ENCODE measurements at regions of chrX and their contacts with region 1.

Region 1: GRCh38 chrX:84729809-84730208 is 227.6 kb upstream of the HDX start:
- DNase-seq: peak; percentile 5 to 43
- ATAC-seq: peak; percentile 96 to 97
- H3K4me3 ChIP-seq: no peak overlapping the region
- H3K27ac ChIP-seq: no peak overlapping the region
- H3K4me1 ChIP-seq: no peaks in the 10 kb centered on the region
- CTCF ChIP-seq: peak; percentile 67
- EP300 ChIP-seq: no peak
- POLR2A ChIP-seq: no peak
- RAD21 ChIP-seq: peak; percentile 59 to 69

Region 2: GRCh38 chrX:84907324-84907968 is 177.6 kb after region 1 on chrX:
- CTCF ChIA-PET with region 1: interaction called, 14 read pairs
- POLR2A ChIA-PET with region 1: no interaction called
- DNase-seq: peak in 1 of 2 experiments; percentile 11
- ATAC-seq: peak in 1 of 2 experiments; percentile 51; a peak in 2 of 6 replicates
- H3K4me3 ChIP-seq: no peak overlapping the region
- H3K27ac ChIP-seq: no peak overlapping the region
- H3K4me1 ChIP-seq: no peaks in the 10 kb centered on the region
- CTCF ChIP-seq: no peak; the same call in 1 of the 3 replicates
- EP300 ChIP-seq: no peak
- POLR2A ChIP-seq: no peak
- RAD21 ChIP-seq: peak in 1 of 2 experiments; percentile 27; a peak in 1 of 5 replicates

Region 3: GRCh38 chrX:85107407-85107806 is 377.6 kb after region 1 on chrX:
- CTCF ChIA-PET with region 1: no interaction called
- POLR2A ChIA-PET with region 1: no interaction called
- DNase-seq: peak in 1 of 2 experiments; percentile 14
- ATAC-seq: peak in 1 of 2 experiments; percentile 30; a peak in 1 of 6 replicates
- H3K4me3 ChIP-seq: no peak overlapping the region
- H3K27ac ChIP-seq: no peak overlapping the region
- H3K4me1 ChIP-seq: no peaks in the 10 kb centered on the region
- CTCF ChIP-seq: no peak
- EP300 ChIP-seq: no peak
- POLR2A ChIP-seq: no peak
- RAD21 ChIP-seq: no peak

Measured in A549 (cell line).